B cell (primary cell): ENCODE measurements at regions of chr1 and their contacts with region 1.

Region 1: GRCh38 chr1:206834711-206835110 is 30.7 kb upstream of the IL20 start:
- DNase-seq: no peak
- ATAC-seq: no peak
- H3K4me3 ChIP-seq: no peak overlapping the region
- H3K4me3 Mint-ChIP-seq: no peak overlapping the region
- H3K27ac ChIP-seq: no peak overlapping the region
- H3K27ac Mint-ChIP-seq: no peak overlapping the region
- H3K4me1 ChIP-seq: peaks cover 49 to 51% of the 10 kb centered on the region in 2 donors
- H3K4me1 Mint-ChIP-seq: peaks cover 49% of the 10 kb centered on the region
- H3K27me3 ChIP-seq: no peaks in the 10 kb centered on the region
- H3K27me3 Mint-ChIP-seq: peaks cover 12% of the 10 kb centered on the region
- CTCF ChIP-seq: no peak

Region 2: DNA sequence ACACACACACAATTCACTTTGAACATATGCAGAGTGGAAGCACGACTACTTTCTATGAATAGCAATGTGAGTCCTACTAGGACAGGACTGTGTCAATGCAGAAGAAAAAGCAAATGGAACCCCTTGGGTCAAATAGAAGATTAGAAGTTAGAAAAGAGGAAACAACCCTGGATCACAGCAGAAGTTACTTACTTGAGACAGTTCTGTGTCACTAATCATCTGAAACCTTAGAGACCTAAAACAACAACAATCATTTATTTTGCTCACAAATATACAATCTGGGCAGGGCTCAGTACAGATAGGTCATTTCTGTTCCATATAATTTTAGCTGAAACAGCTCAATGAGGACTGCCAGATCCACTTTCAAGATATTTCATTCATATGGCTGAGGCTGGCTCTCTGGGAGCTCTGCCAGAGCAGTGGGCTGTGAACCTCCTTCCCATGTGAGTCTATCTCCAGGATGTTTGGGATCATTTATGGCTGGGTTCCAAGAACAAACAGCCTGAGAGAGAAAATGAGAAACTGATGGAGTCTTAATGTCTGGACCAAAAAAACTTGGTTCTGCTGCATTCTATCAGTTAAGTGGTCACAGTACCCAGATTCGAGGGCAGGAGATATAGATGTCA is 19.9 kb before region 1 on chr1:
- CTCF ChIA-PET with region 1: interaction called, 36 read pairs
- POLR2A ChIA-PET with region 1: interaction called, 4 read pairs
- intact Hi-C with region 1: loop called (anchors 2 kb)
- DNase-seq: peak; percentile 68
- ATAC-seq: peak; percentile 74
- H3K4me3 ChIP-seq: peak overlapping the region in 1 of 5 experiments; percentile 31
- H3K4me3 Mint-ChIP-seq: peak overlapping the region; percentile 62
- H3K27ac ChIP-seq: peak overlapping the region; percentile 81 to 82
- H3K27ac Mint-ChIP-seq: peak overlapping the region; percentile 88
- H3K4me1 ChIP-seq: peaks cover 33 to 44% of the 10 kb centered on the region in 2 donors
- H3K4me1 Mint-ChIP-seq: peaks cover 45% of the 10 kb centered on the region
- H3K27me3 ChIP-seq: no peaks in the 10 kb centered on the region
- H3K27me3 Mint-ChIP-seq: no peaks in the 10 kb centered on the region
- CTCF ChIP-seq: no peak

Region 3: GRCh38 chr1:206872139-206872538 is 37.4 kb after region 1 on chr1:
- CTCF ChIA-PET with region 1: no interaction called
- POLR2A ChIA-PET with region 1: no interaction called
- intact Hi-C with region 1: loop called (anchors 5 kb)
- DNase-seq: no peak
- ATAC-seq: no peak
- H3K4me3 ChIP-seq: no peak overlapping the region
- H3K4me3 Mint-ChIP-seq: no peak overlapping the region
- H3K27ac ChIP-seq: no peak overlapping the region
- H3K27ac Mint-ChIP-seq: no peak overlapping the region
- H3K4me1 ChIP-seq: no peaks in the 10 kb centered on the region
- H3K4me1 Mint-ChIP-seq: no peaks in the 10 kb centered on the region
- H3K27me3 ChIP-seq: no peaks in the 10 kb centered on the region
- H3K27me3 Mint-ChIP-seq: peaks cover 3% of the 10 kb centered on the region
- CTCF ChIP-seq: no peak

Region 4: GRCh38 chr1:206895830-206896242 is 61.1 kb after region 1 on chr1:
- CTCF ChIA-PET with region 1: no interaction called
- POLR2A ChIA-PET with region 1: no interaction called
- intact Hi-C with region 1: no loop called
- DNase-seq: no peak
- ATAC-seq: no peak
- H3K4me3 ChIP-seq: no peak overlapping the region
- H3K4me3 Mint-ChIP-seq: no peak overlapping the region
- H3K27ac ChIP-seq: no peak overlapping the region
- H3K27ac Mint-ChIP-seq: no peak overlapping the region
- H3K4me1 ChIP-seq: peaks cover 4 to 5% of the 10 kb centered on the region in 2 donors
- H3K4me1 Mint-ChIP-seq: peaks cover 24% of the 10 kb centered on the region
- H3K27me3 ChIP-seq: no peaks in the 10 kb centered on the region
- H3K27me3 Mint-ChIP-seq: no peaks in the 10 kb centered on the region
- CTCF ChIP-seq: no peak

Region 5: DNA sequence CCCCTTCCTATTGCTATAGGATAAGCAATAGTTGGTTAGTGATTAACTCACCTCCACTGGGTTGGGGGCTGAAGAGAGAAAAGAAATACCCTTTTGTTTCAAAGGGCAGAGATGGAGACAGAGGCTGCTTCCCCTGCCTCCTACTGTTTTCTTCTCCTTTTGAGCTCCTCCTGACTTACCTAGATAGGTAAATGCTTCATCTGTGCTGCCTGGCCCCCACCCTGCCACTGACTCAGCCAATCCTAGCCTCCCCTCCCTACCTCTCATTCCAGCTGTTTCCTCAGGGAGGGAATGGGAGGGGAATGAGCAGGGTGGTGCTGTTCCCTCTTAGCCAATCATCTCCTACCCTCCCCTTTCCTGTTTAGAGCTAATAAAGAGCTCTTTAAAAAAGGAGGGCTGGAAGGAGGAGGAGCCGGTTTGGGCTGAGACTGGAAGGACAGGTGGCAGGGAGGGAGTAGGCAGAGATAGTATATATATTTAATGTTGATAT is 197.9 kb after region 1 on chr1 and contains the start of gene C1orf116:
- CTCF ChIA-PET with region 1: no interaction called
- POLR2A ChIA-PET with region 1: no interaction called
- intact Hi-C with region 1: no loop called
- DNase-seq: no peak
- ATAC-seq: no peak
- H3K4me3 ChIP-seq: no peak within 1 kb of the TSS
- H3K4me3 Mint-ChIP-seq: no peak within 1 kb of the TSS
- H3K27ac ChIP-seq: no peak within 1 kb of the TSS
- H3K27ac Mint-ChIP-seq: no peak within 1 kb of the TSS
- H3K4me1 ChIP-seq: no peaks in the 10 kb centered on the region
- H3K4me1 Mint-ChIP-seq: no peaks in the 10 kb centered on the region
- H3K27me3 ChIP-seq: peaks cover 0 to 28% (median 14%) of the 10 kb centered on the region in 4 experiments
- H3K27me3 Mint-ChIP-seq: peaks cover 62% of the 10 kb centered on the region
- CTCF ChIP-seq: no peak
- total RNA-seq, gene C1orf116: 0.10 TPM in 1 of 2 replicates, not detected in the other